Ascending aorta (tissue), 2 donors: ENCODE measurements at regions of chr4 and their contacts with region 1.

Region 1: DNA sequence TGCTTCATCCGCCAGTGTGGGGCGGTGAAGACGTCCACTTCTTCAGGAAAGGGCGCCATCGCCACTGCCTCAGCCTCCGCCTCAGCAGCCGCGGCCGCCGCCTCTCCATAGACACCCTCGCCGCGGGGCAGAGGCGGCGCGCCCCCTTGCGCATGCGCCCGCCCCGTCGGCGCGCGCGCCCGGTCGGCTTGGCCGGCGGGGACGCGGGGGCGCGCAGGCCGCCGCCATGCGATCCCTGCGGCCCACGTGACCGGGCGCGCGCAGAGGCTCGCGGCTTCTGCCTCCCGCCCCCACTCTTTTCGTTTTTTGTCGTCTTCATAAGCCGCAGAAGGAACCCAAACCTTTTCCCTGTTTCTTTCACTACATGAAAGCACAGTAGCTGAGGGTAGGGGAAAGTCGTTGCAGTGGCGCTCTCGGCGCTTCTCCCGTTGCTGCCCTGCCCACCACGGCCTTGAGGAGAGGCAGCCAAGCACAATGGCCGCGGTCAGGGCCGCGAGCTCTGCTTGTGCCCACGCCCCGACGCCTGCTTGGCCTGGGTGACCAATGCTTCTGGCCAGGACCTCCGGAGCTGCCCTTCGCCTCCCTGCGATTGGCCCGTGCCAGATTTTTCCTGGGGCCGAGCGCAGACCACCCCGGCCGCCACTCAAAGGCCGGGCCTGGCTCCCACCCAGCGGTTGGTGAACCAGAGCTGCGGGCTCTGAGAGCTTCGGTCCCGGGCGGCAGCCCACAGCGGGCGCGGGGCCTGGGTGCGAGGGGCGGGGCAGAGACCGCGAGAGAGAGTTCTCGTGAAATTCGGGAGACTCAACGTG is at the start of gene FBXL5:
- DNase-seq: peak; percentile 20 to 88
- H3K4me3 ChIP-seq: peak within 1 kb of the TSS; percentile 82 to 94
- H3K27ac ChIP-seq: peak within 1 kb of the TSS; percentile 98 to 99
- H3K4me1 ChIP-seq: peaks cover 2 to 40% of the 10 kb centered on the region in 2 donors
- H3K27me3 ChIP-seq: no peaks in the 10 kb centered on the region
- CTCF ChIP-seq: peak in 1 of 3 experiments; percentile 23
- total RNA-seq, gene FBXL5: 59.0 TPM

Region 2: DNA sequence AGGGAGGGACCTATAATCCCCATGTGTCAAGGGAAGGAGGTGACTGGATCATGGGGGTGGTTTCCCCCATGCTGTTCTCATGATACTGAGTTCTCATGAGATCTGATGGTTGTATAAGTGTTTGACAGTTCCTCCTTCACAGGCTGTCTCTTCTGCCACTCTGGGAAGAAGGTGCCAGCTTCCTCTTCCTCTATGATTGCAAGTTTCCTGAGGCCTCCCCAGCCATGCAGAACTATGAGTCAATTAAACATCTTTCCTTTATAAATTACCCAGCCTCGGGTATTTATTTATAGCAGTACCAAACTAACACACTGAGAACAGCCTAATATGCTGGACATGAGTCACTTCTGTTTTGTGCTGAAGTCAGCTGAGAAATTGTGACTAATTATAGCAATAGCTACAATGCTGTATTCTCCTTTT is 1310.1 kb before region 1 on chr4:
- intact Hi-C with region 1: loop called (anchors 5 kb)
- DNase-seq: peak in 1 of 2 donors; percentile 65
- H3K4me3 ChIP-seq: no peak overlapping the region
- H3K27ac ChIP-seq: no peak overlapping the region
- H3K4me1 ChIP-seq: no peaks in the 10 kb centered on the region
- H3K27me3 ChIP-seq: no peaks in the 10 kb centered on the region
- CTCF ChIP-seq: no peak

Region 3: GRCh38 chr4:15231265-15232091 is 424.0 kb before region 1 on chr4:
- intact Hi-C with region 1: loop called (anchors 5 kb)
- DNase-seq: peak in 1 of 2 donors; percentile 92
- H3K4me3 ChIP-seq: no peak overlapping the region
- H3K27ac ChIP-seq: peak overlapping the region; percentile 66 to 86
- H3K4me1 ChIP-seq: peaks cover 21 to 41% of the 10 kb centered on the region in 2 donors
- H3K27me3 ChIP-seq: no peaks in the 10 kb centered on the region
- CTCF ChIP-seq: peak; percentile 57 to 77 (median 70)

Region 4: DNA sequence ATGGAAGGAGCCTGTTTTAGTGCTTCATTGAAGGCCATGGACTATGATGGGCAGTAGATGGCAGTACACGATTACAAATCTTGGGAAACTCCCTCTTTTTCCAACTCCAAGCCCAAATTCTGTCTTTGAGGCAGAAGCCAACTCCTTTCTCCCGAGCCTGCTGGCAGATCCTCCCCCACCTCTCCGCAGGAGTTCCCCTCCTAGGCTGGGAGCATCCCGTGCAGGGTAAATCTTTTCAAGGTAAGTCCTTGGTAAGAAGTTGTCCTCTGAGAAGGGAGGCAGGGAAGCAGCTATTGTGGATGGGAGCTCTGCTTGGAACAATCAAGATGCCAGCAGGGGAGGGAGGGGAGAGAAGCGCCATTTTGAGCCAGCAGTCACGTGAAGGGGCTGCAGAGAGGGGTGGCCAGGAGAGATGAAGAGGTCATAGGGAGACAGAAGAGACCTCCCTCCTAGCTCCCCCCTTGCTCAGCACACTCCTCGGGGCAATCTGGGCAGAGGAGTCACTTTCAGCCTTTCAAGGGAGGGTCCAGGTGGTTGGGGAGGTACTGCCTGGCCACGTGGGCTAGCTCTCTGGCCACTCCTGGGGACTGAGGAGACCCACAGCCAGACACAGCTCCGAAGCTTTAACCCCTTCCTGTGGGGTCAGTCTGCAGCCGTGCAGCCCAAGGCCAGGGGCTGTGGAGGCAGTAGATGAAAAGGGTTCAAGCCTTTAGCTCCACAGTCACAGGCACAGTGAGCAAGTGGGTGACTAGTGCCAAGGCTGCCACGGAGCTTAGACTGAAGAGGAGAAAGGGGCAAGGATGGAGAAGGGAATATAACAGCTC is 176.1 kb before region 1 on chr4:
- intact Hi-C with region 1: loop called (anchors 2 kb)
- DNase-seq: no peak
- H3K4me3 ChIP-seq: peak overlapping the region; percentile 51 to 71
- H3K27ac ChIP-seq: peak overlapping the region; percentile 76 to 78
- H3K4me1 ChIP-seq: peaks cover 3 to 10% of the 10 kb centered on the region in 2 donors
- H3K27me3 ChIP-seq: no peaks in the 10 kb centered on the region
- CTCF ChIP-seq: peak; percentile 59 to 70 (median 68)

Region 5: GRCh38 chr4:15681207-15682015 is 26.0 kb after region 1 on chr4 and contains the start of gene FAM200B:
- intact Hi-C with region 1: loop called (anchors 1 kb)
- DNase-seq: peak; percentile 90 to 99
- H3K4me3 ChIP-seq: peak within 1 kb of the TSS; percentile 80 to 82
- H3K27ac ChIP-seq: peak within 1 kb of the TSS; percentile 85 to 96
- H3K4me1 ChIP-seq: peaks cover 2 to 4% of the 10 kb centered on the region in 2 donors
- H3K27me3 ChIP-seq: no peaks in the 10 kb centered on the region
- CTCF ChIP-seq: peak in 1 of 3 experiments; percentile 12
- total RNA-seq, gene FAM200B: 34.9 TPM

Region 6: DNA sequence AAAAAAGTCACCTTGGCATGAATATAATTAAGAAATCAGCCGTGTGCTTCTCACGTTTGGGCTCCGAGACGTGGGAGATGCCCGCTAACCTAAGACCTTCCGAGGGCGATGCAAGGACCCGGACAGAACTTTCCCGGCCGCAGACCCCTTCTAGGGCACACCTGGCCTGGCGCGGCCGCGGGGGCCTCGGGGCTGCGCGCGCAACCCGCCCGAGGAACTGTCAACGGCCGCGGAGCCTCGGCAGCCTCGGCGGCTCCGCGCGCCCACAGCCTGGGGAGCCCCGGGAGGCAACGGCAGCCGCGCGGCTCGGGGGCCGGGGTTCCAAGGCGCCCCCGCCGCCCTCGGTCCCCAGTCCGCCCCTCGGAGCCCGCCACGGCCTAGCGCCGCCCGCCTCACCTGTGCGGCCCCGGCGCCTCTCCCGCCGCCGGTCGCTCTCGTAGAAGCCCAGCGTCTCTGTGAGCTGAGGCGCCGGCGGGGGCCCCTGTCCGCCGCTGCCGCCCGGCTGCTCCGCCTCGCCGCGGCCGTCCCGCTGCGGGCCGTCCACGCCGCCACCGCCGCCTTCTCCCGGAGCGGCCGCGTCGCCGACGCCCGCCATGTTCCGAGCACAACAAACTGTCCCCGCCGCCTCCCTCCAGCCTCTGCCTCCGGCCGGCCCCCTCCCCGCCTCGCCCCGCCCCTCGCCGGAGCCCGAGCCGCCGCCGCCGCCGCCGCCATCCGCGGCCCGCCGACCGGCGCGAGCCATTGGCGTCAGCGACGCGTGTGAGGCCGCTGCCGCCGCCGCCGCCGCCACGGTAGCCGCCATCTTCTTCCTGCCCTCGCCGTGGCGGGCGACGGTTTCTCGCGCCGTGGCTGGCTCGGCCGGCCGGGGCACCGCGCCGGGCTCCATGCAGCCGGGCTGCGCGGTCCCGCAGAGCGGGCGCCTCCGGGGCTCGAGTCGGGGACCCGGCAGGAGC is 570.7 kb after region 1 on chr4 and contains the start of gene TAPT1:
- intact Hi-C with region 1: loop called (anchors 10 kb)
- DNase-seq: peak in 1 of 2 donors; percentile 85
- H3K4me3 ChIP-seq: peak within 1 kb of the TSS; percentile 93 to 96
- H3K27ac ChIP-seq: peak within 1 kb of the TSS; percentile 98
- H3K4me1 ChIP-seq: peaks cover 4 to 37% of the 10 kb centered on the region in 2 donors
- H3K27me3 ChIP-seq: no peaks in the 10 kb centered on the region
- CTCF ChIP-seq: no peak
- total RNA-seq, gene TAPT1: 10.7 TPM